Activated CD8-positive, alpha-beta T cell treated with anti-CD3 and anti-CD28 coated beads for 36 hours (primary cell): ENCODE measurements at regions of chr3 and their contacts with region 1.

Region 1: DNA sequence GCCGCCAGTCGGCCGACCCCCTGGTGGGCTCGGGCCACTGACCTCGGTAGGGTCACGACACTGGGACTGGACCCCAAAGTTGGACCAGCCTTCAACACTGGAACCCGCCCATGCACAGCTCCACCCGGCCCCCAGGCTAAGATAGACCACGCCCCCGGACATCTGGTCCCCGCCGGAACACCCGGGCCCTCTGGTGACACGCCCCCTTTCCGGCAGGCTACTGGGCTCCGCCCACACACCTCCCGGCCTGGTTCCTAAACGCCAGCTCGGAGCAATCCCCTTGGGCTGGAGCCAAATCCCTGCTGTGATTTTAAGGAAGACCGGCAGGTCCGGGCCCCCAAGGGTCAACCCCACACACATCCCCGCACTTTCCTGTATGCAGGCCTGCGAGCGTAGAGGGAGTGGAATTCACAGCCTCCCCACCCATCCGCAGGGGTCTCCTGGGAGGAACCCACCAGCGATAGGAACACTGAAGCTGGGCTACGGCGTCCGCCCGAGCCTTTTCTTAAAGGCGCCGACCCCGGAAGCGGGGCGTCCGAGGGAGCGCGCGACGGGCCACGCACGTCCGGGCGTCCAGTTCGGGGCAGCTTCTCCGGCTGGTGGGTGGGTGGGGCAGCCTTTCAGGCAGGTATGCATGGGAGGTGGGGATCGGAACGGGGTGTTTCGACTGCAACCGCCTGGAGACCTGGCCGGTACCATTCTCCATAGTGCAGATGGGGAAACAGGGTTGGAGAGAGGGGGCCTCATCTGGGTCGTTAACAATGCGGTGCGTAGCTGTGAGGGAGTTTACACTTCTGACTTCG is at the start of gene HEMK1:
- DNase-seq: peak; percentile 99
- ATAC-seq: peak; percentile 38
- H3K4me3 Mint-ChIP-seq: peak within 1 kb of the TSS; percentile 91
- H3K27ac Mint-ChIP-seq: peak within 1 kb of the TSS; percentile 98
- H3K4me1 Mint-ChIP-seq: peaks cover 47% of the 10 kb centered on the region
- H3K27me3 Mint-ChIP-seq: peaks cover 2% of the 10 kb centered on the region
- CTCF ChIP-seq: no peak
- total RNA-seq, gene HEMK1: 97.1 to 101 TPM

Region 2: DNA sequence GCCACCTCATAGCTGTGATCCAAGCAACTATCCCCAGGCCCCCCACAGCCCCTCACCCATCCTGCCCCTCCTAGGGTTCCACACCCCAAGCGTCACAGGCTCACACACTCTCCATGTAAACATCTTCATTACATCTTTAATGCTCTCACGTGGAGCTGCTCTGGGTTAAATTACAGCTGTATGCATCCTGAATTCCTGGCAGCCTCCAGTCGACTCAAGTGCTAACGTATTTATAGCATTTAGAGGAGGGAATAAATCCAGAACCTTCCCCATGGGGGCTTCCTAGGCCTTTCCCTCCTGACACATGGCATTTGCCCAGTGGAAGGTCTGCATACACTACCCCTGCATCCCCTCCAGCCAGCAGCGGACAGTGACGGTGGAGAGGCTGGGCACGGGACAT is 11.2 kb before region 1 on chr3:
- CTCF ChIA-PET with region 1: no interaction called
- POLR2A ChIA-PET with region 1: interaction called, 13 read pairs
- intact Hi-C with region 1: no loop called
- DNase-seq: no peak
- ATAC-seq: no peak
- H3K4me3 Mint-ChIP-seq: no peak overlapping the region
- H3K27ac Mint-ChIP-seq: no peak overlapping the region
- H3K4me1 Mint-ChIP-seq: peaks cover 8% of the 10 kb centered on the region
- H3K27me3 Mint-ChIP-seq: no peaks in the 10 kb centered on the region
- CTCF ChIP-seq: no peak

Region 3: DNA sequence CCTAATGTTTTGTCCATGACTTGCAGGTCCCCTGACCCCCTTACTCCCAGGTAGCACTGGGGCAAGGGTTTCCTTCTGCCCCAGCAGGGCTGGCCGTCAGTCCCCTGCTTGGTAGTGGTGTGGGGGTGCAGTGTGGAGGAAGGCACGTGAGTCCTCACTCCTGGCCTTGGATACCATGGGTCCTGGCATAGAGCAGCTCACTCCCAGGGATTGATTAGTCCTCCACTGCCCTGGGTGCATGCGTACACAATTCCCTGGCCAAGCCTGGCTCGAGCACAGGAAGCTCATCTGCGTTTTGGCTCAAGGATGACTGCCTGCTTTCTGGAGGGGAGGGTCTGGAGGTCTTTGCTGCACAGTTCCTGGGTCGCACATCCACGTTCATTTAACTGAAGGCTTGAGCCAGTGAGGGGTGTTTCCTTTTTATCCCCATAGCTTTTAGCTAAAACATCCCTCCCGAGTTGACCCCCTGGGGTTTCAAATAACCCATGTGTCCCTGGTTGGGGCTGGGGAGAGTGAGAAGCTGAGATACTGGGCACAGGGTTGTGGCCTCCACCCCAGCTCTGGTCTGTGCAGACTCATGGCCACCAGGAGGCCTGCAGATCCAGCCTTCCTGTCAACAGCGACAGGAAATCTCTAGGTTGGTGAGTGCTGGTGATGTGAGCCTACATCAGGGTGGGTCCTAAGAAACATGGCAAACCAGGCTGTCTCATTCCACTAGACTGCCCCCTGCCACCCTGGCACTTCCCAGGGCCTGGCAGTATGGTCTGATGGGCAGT is 11.7 kb after region 1 on chr3:
- CTCF ChIA-PET with region 1: interaction called, 283 read pairs
- POLR2A ChIA-PET with region 1: interaction called, 853 read pairs
- intact Hi-C with region 1: no loop called
- DNase-seq: peak; percentile 11
- ATAC-seq: no peak
- H3K4me3 Mint-ChIP-seq: no peak overlapping the region
- H3K27ac Mint-ChIP-seq: peak overlapping the region; percentile 64
- H3K4me1 Mint-ChIP-seq: peaks cover 69% of the 10 kb centered on the region
- H3K27me3 Mint-ChIP-seq: no peaks in the 10 kb centered on the region
- CTCF ChIP-seq: no peak

Region 4: DNA sequence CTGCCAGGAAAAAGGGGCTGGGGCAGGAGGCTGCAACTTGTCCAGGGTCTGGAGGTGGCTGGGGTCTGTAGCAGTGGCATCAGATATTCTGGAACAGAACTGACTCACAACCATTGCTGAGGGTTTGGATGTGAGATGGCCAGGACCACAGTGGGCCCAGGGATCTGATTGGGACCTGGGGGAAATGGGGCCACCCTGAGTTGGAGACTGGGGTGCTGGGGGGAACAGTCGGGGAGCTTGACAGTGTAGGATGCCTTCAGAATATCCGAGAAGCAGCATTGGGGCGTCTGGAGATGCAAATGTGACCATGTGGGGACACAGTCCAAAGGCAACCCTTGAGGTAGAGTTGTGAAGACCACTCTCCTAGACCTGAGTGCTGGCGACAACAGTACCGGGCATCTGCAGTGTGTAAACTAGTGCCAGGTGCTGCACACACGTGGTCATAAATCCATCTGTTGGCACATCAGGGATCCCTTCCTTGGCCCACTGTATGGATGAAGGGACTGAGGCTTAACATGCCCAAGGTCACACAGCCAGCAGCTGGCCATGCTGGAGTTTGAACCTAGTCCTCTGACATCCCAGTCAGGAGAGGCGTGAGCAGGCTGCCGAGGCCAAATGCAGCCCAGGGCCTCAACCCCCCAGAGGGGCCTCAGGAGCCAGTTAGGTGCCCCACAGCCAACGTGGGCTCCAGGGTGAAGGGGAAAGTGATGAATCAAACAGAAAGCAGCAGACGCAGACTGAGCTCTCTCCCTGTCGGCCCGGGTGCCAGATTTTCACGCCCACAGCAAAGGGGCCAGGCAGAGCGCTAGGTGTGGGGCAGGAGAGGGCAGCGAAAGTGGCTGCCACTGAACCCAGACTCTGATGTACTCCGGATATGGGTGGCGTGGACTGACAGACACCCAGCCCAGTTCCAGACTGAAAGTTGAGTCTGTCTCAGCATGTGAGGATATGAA is 18.9 kb after region 1 on chr3:
- CTCF ChIA-PET with region 1: interaction called, 283 read pairs
- POLR2A ChIA-PET with region 1: interaction called, 853 read pairs
- intact Hi-C with region 1: loop called (anchors 1 kb)
- DNase-seq: peak; percentile 96
- ATAC-seq: peak; percentile 48
- H3K4me3 Mint-ChIP-seq: peak overlapping the region; percentile 59
- H3K27ac Mint-ChIP-seq: peak overlapping the region; percentile 100
- H3K4me1 Mint-ChIP-seq: peaks cover 89% of the 10 kb centered on the region
- H3K27me3 Mint-ChIP-seq: no peaks in the 10 kb centered on the region
- CTCF ChIP-seq: no peak

Region 5: DNA sequence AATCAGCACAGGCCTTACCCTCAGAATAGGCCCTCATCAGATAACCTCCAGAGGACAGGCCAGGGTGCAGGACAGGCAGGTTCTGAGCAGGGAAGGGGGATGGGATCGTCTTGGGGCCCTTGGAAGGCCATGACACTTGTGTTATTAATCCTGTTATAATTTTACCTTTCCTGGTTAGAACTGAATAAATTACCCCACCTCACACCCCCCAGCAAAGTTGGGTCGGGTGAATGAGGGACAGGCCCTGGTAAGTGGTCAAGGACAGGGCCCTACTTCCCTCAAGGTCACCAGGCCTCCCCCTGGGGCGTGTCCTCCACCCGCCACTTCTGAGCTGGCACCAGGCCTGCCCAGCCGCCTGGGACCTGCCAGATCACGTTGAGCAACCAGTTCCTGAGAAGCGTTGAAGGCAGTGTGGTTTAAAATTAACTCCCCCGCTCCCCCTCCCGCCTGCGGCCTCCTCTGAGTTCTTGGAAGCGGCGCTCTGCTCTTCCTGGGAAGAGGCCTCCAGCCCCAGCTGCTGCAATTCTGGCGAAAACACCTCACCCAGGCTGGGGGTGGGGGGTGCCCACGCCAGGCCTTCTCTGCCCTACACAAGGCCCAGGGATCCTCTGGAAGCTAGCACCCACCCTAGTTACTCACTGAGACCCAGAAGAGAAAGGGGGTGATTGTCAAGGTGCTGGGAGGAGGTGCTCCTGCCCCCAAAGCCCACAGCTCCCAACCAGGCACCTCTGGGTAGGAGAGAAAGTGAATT is 31.9 kb after region 1 on chr3:
- CTCF ChIA-PET with region 1: interaction called, 769 read pairs
- POLR2A ChIA-PET with region 1: interaction called, 2,276 read pairs
- intact Hi-C with region 1: loop called (anchors 1 kb)
- DNase-seq: peak; percentile 98
- ATAC-seq: peak; percentile 59
- H3K4me3 Mint-ChIP-seq: peak overlapping the region; percentile 94
- H3K27ac Mint-ChIP-seq: peak overlapping the region; percentile 100
- H3K4me1 Mint-ChIP-seq: peaks cover 78% of the 10 kb centered on the region
- H3K27me3 Mint-ChIP-seq: no peaks in the 10 kb centered on the region
- CTCF ChIP-seq: no peak

Region 6: GRCh38 chr3:50652709-50653108 is 83.6 kb after region 1 on chr3:
- CTCF ChIA-PET with region 1: interaction called, 14 read pairs
- POLR2A ChIA-PET with region 1: interaction called, 11 read pairs
- intact Hi-C with region 1: no loop called
- DNase-seq: peak; percentile 74
- ATAC-seq: peak; percentile 56
- H3K4me3 Mint-ChIP-seq: no peak overlapping the region
- H3K27ac Mint-ChIP-seq: peak overlapping the region; percentile 26
- H3K4me1 Mint-ChIP-seq: peaks cover 25% of the 10 kb centered on the region
- H3K27me3 Mint-ChIP-seq: no peaks in the 10 kb centered on the region
- CTCF ChIP-seq: peak; percentile 73